Activated naive CD4-positive, alpha-beta T cell treated with anti-CD3 and anti-CD28 coated beads for 36 hours (primary cell): ENCODE measurements at regions of chrX and their contacts with region 1.

Region 1: GRCh38 chrX:130902783-130903613 is at the start of gene ENOX2:
- DNase-seq: peak; percentile 84
- H3K4me3 Mint-ChIP-seq: no peak within 1 kb of the TSS
- H3K27ac Mint-ChIP-seq: no peak within 1 kb of the TSS
- H3K4me1 Mint-ChIP-seq: peaks cover 9% of the 10 kb centered on the region
- H3K27me3 Mint-ChIP-seq: no peaks in the 10 kb centered on the region
- total RNA-seq, gene ENOX2: 8.7 to 9.7 TPM

Region 2: GRCh38 chrX:130165703-130166502 is 737.1 kb before region 1 on chrX and contains the start of gene AIFM1:
- CTCF ChIA-PET with region 1: no interaction called
- intact Hi-C with region 1: loop called (anchors 5 kb)
- DNase-seq: peak; percentile 90
- H3K4me3 Mint-ChIP-seq: peak within 1 kb of the TSS; percentile 93
- H3K27ac Mint-ChIP-seq: peak within 1 kb of the TSS; percentile 92
- H3K4me1 Mint-ChIP-seq: peaks cover 35% of the 10 kb centered on the region
- H3K27me3 Mint-ChIP-seq: no peaks in the 10 kb centered on the region
- total RNA-seq, gene AIFM1: 59.4 to 63.1 TPM

Region 3: GRCh38 chrX:130339408-130340222 is 563.4 kb before region 1 on chrX and contains the start of gene SLC25A14:
- CTCF ChIA-PET with region 1: no interaction called
- intact Hi-C with region 1: loop called (anchors 1 kb)
- DNase-seq: peak; percentile 82
- H3K4me3 Mint-ChIP-seq: peak within 1 kb of the TSS; percentile 86
- H3K27ac Mint-ChIP-seq: peak within 1 kb of the TSS; percentile 89
- H3K4me1 Mint-ChIP-seq: peaks cover 13% of the 10 kb centered on the region
- H3K27me3 Mint-ChIP-seq: no peaks in the 10 kb centered on the region
- total RNA-seq, gene SLC25A14: 7.4 to 9.0 TPM

Region 4: DNA sequence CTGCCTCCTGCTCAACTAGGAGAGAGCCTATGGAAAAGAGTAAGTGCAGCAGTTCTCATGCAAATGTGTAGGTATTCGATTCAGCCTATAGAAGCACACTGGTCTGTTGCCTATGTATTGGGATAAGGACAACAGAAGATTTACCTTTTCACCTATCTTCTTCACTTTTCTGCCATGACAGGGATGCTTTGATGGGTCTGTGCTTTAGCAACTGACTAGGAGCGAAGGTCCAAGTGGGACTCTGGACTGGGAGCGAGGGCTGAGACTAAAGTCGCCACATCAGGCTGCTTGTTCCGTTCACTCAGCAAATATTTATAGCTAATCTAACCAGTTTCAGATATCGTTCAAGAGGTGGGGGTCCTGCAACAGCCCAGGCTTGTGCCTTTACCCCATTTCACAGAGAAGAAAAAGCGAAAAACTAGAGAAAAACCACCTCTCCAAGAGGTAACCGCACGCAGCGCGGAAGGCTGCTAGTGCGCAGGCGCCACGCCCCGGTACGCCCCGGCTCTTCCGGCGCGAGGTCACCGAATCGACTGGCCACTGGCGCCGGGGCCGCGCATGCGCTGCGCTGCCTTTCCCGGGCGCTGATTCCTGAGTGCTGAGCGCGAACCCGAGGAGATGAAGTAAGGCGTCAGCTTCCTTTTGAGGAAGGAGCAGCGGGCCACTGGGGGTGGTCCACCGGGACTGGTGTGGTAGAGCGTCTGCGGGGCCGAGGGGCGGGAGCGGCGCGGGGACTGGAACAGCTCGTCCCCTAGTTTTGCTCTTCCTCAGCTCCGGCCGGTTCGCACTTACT is 501.4 kb before region 1 on chrX and contains the start of gene RBMX2:
- CTCF ChIA-PET with region 1: no interaction called
- intact Hi-C with region 1: loop called (anchors 1 kb)
- DNase-seq: peak; percentile 63
- H3K4me3 Mint-ChIP-seq: peak within 1 kb of the TSS; percentile 83
- H3K27ac Mint-ChIP-seq: peak within 1 kb of the TSS; percentile 90
- H3K4me1 Mint-ChIP-seq: peaks cover 20% of the 10 kb centered on the region
- H3K27me3 Mint-ChIP-seq: no peaks in the 10 kb centered on the region
- total RNA-seq, gene RBMX2: 32.3 to 33.6 TPM

Region 5: GRCh38 chrX:130539721-130540321 is 363.2 kb before region 1 on chrX:
- CTCF ChIA-PET with region 1: no interaction called
- intact Hi-C with region 1: loop called (anchors 1 kb)
- DNase-seq: peak; percentile 65
- H3K4me3 Mint-ChIP-seq: no peak overlapping the region
- H3K27ac Mint-ChIP-seq: no peak overlapping the region
- H3K4me1 Mint-ChIP-seq: no peaks in the 10 kb centered on the region
- H3K27me3 Mint-ChIP-seq: peaks cover 6% of the 10 kb centered on the region

Region 6: DNA sequence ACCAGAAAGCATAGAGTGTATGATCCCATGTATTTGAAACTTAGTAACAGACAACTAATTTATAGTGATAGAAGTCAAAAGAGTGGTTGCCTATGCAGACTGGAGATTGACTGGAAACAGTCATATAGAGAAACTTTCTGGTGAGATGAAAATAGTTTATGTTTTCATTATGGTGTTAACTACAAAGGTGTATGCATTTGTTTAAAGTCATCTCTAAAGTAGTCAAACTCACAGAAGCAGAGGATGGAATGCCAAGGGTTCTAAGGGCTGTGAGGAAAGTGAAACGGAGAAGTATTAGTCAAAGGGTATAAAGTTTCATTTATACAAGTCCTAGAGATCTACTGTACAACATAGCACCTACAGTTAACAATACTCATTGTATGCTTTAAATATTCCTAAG is 45.8 kb before region 1 on chrX:
- CTCF ChIA-PET with region 1: no interaction called
- intact Hi-C with region 1: loop called (anchors 1 kb)
- DNase-seq: peak; percentile 19
- H3K4me3 Mint-ChIP-seq: no peak overlapping the region
- H3K27ac Mint-ChIP-seq: no peak overlapping the region
- H3K4me1 Mint-ChIP-seq: peaks cover 8% of the 10 kb centered on the region
- H3K27me3 Mint-ChIP-seq: no peaks in the 10 kb centered on the region

Region 7: GRCh38 chrX:131812836-131813825 is 910.1 kb after region 1 on chrX:
- CTCF ChIA-PET with region 1: no interaction called
- intact Hi-C with region 1: loop called (anchors 2 kb)
- DNase-seq: peak; percentile 79
- H3K4me3 Mint-ChIP-seq: peak overlapping the region; percentile 67
- H3K27ac Mint-ChIP-seq: peak overlapping the region; percentile 89
- H3K4me1 Mint-ChIP-seq: peaks cover 30% of the 10 kb centered on the region
- H3K27me3 Mint-ChIP-seq: no peaks in the 10 kb centered on the region